ENCODE measurements at regions of chr20 and their contacts with region 1.

Region 1: GRCh38 chr20:25390538-25391528 is at the start of gene ABHD12:
- DNase-seq: peak; percentile 95 to 99
- H3K4me3 ChIP-seq: peak within 1 kb of the TSS; percentile 75
- CTCF ChIP-seq: no peak
- POLR2A ChIP-seq: no peak
- total RNA-seq, gene ABHD12: 51.7 to 121 (median 103) TPM

Region 2: DNA sequence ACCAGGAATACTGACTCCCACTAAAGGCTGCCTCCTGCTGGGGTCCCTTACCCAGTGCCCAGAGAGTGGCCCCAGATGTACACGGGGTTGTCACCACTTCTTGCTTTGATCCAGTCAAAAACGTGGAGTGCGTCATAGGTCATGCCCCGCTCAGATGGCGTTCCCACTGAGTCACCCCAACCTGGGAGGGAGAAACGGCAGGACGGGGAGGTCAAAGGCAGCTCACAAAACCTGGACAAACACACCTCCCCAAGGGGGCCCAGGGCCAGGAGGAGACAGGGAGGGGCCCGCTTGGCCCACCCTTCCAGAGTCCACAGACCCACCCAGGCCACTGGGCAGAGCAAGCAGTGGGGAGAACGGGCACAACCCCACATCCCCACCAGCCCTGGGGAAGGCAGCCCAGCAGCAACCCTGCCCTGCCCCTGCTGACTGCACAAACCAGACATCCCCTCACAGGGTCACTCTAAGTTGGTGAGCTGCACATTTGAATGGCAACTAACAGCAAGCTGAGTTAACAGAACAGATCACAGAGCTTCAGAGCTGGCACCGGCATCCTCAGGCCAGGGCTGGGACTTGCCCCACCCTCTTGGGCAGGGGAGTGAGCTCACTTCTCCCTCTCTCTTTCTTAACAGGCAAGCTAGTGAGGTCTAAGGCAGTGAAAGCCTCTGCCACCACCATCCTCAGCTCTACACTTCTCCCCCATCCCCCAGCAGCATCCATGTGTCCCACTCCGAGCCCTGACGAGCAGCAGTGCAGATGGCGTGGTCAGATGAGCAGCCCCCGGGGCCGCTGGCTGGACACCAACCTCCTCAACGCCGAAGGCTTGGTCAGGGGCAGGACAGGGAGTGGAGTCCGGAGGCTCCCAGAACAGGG is 81.2 kb before region 1 on chr20:
- intact Hi-C with region 1: loop called (anchors 10 kb)
- DNase-seq: no peak
- H3K4me3 ChIP-seq: no peak overlapping the region
- CTCF ChIP-seq: no peak
- POLR2A ChIP-seq: no peak

Measured in lower leg skin (tissue), 4 donors.